ENCODE measurements at regions of chr12 and their contacts with region 1.

Region 1: DNA sequence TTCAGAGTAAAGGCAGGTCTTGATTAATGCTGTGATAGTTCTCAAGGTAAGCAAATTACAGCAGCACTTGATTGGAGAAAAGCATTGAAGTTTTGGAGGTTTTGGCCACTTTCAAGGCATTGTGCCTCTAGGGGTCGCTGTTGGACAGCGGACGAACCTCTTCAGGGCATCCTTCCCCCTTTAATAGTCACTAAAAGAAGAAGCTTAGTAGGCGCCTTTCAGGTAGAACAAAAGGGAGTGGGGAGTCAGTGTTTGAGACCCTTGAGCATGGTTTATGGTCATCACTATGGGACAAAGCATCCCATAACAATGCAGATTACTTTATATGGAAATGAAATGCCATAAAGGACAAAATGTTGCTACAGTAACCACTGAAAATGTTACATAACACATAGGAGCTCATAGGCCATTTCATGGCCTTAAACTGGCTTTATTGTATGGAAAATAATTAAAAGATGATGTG is 199.5 kb upstream of the DCN start:
- DNase-seq: peak; percentile 88
- H3K4me3 ChIP-seq: peak overlapping the region; percentile 38 to 50 (median 44)
- H3K27ac ChIP-seq: peak overlapping the region; percentile 49 to 78 (median 62)
- H3K4me1 ChIP-seq: peaks cover 0 to 12% (median 8%) of the 10 kb centered on the region in 4 donors
- H3K27me3 ChIP-seq: no peaks in the 10 kb centered on the region
- CTCF ChIP-seq: peak; percentile 53 to 90 (median 78)
- EP300 ChIP-seq: no peak
- POLR2A ChIP-seq: no peak

Region 2: GRCh38 chr12:91307957-91308670 is 74.0 kb before region 1 on chr12:
- intact Hi-C with region 1: no loop called
- DNase-seq: no peak
- H3K4me3 ChIP-seq: no peak overlapping the region
- H3K27ac ChIP-seq: peak overlapping the region in 2 of 4 donors; percentile 12 to 48
- H3K4me1 ChIP-seq: peaks cover 0 to 23% (median 15%) of the 10 kb centered on the region in 4 donors
- H3K27me3 ChIP-seq: no peaks in the 10 kb centered on the region
- CTCF ChIP-seq: no peak
- EP300 ChIP-seq: no peak
- POLR2A ChIP-seq: no peak

Region 3: DNA sequence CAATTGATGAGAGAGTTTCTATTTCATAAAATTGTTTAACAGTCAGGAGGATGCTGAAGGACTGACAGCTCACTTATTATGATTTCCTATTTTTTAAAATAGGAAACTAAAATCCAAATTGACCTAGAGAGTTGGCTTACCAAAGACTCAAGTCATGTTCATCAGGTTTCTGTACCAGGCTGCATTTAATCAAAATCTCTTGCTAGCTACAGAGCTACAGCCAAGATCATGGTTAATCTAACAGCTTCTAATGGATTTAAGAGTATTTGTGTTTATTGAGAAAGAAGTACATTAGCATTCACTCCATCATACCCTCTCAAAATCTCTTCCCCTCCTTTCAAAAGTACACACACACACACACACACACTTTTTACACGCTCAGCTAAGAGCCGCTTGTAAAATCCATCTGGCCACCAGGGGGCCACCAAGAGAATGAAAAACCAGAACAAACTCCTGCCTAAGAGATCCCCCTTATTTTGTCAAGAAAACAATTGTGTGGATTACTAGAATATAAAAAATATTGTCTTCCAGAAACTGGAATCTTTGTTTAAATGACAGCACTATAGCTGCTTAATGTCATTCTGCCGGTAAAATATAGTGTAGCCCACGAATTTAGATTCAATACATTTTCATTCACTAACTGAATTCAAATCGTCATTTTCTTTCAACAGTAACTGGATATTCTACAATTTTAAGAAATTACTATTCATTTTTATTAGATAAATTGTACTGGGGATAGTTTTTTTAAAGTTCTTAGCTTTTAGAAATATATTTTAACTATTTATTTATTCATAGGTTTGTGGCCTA is 429.6 kb after region 1 on chr12:
- intact Hi-C with region 1: loop called (anchors 2 kb)
- DNase-seq: peak; percentile 80
- H3K4me3 ChIP-seq: no peak overlapping the region
- H3K27ac ChIP-seq: no peak overlapping the region
- H3K4me1 ChIP-seq: no peaks in the 10 kb centered on the region
- H3K27me3 ChIP-seq: no peaks in the 10 kb centered on the region
- CTCF ChIP-seq: peak; percentile 64 to 93 (median 80)
- EP300 ChIP-seq: no peak
- POLR2A ChIP-seq: no peak

Region 4: GRCh38 chr12:92649511-92650227 is 1267.6 kb after region 1 on chr12:
- intact Hi-C with region 1: loop called (anchors 5 kb)
- DNase-seq: peak; percentile 71
- H3K4me3 ChIP-seq: no peak overlapping the region
- H3K27ac ChIP-seq: no peak overlapping the region
- H3K4me1 ChIP-seq: peaks cover 0 to 5% (median 0%) of the 10 kb centered on the region in 4 donors
- H3K27me3 ChIP-seq: no peaks in the 10 kb centered on the region
- CTCF ChIP-seq: peak; percentile 53 to 66 (median 64)
- EP300 ChIP-seq: no peak
- POLR2A ChIP-seq: no peak